ENCODE measurements at regions of chr1 and their contacts with region 1.

Region 1: GRCh38 chr1:171263901-171264300 is 15.6 kb downstream of the FMO1 start:
- DNase-seq: no peak
- ATAC-seq: no peak
- H3K4me3 ChIP-seq: no peak overlapping the region
- H3K27ac ChIP-seq: no peak overlapping the region
- H3K4me1 ChIP-seq: no peaks in the 10 kb centered on the region
- H3K27me3 ChIP-seq: no peaks in the 10 kb centered on the region
- CTCF ChIP-seq: no peak

Region 2: DNA sequence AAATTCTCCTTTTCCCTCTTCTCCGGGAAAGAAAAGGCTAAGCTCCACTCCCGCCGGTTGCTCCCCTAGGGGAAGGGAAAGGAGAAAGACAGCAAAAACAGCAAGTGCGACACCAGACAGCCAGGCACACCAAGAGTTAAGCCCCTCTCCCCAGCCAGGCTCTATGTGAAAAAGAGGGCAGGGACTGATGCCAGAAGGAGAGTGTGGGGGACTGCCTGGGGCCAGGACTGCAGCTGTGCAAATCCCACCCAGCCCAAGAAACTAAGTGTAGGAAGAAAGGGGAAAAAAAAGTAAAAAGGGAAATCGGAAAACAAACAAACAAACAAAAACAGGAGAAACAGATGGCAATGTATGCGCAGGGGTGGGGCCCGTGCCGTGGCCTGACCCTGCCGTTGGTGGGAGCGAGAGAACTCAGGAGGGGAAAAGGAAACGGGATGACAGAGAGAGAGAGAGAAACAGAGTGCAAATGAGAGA is 43.3 kb before region 1 on chr1:
- intact Hi-C with region 1: no loop called
- DNase-seq: no peak
- ATAC-seq: no peak
- H3K4me3 ChIP-seq: no peak overlapping the region
- H3K27ac ChIP-seq: peak overlapping the region; percentile 36
- H3K4me1 ChIP-seq: peaks cover 2% of the 10 kb centered on the region
- H3K27me3 ChIP-seq: no peaks in the 10 kb centered on the region
- CTCF ChIP-seq: no peak

Region 3: GRCh38 chr1:171506525-171507304 is 242.8 kb after region 1 on chr1:
- intact Hi-C with region 1: loop called in 1 of 2 experiments (anchors 5 kb)
- DNase-seq: no peak
- ATAC-seq: peak in 1 of 4 donors; percentile 39
- H3K4me3 ChIP-seq: no peak overlapping the region
- H3K27ac ChIP-seq: no peak overlapping the region
- H3K4me1 ChIP-seq: peaks cover 29% of the 10 kb centered on the region
- H3K27me3 ChIP-seq: no peaks in the 10 kb centered on the region
- CTCF ChIP-seq: no peak

Region 4: DNA sequence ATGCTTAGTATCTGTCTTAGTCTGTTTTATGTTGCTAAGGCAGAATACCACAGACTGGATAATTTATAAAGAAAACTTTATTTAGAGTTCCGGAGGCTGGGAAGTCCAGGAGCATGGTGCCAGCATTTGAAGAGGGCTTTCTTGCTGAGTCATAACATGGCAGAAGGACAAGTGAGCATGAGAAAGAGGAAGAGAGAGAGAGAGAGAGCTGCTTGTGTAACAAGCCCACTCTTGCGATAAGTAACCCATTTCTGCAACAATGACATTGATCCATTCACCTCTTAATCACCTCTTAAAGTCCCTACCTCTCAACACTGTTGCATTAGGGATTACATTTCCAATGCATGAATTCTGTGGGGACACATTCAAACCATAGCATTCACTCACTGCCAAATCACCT is 346.5 kb after region 1 on chr1:
- intact Hi-C with region 1: no loop called
- DNase-seq: no peak
- ATAC-seq: no peak
- H3K4me3 ChIP-seq: no peak overlapping the region
- H3K27ac ChIP-seq: no peak overlapping the region
- H3K4me1 ChIP-seq: no peaks in the 10 kb centered on the region
- H3K27me3 ChIP-seq: no peaks in the 10 kb centered on the region
- CTCF ChIP-seq: no peak

Measured in psoas muscle (tissue), 8 donors.